ENCODE measurements at regions of chr12 and their contacts with region 1.

Region 1: DNA sequence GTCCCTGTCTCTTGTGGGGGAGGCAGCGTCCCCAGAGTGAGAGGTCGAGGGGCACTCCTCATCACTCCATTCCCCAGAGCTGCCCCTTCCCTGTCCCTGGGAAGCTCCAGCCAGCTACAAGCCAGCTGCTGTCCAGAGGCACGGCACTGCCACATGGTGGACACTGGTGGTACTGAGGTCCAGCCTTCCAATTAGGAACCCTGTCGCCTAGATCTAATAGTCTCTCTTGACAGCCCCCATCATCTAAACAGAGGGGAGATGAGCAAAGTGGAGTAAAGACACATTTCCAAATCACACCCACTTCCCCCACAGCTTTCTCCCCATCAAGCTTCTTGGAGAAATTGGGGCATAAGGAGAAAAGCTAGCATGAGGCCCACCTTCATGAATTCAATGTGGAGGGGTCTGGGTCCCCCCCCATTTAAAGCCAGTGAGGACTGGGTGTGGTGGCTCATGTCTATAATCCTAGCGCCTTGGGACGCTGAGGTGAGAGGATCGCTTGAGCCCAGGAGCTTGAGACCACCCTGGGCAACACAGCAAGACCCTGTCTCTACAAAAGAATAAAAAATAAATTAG is 2.1 kb upstream of the INHBE start:
- DNase-seq: peak; percentile 82 to 88 (median 84)
- ATAC-seq: peak; percentile 83
- H3K4me3 ChIP-seq: no peak overlapping the region
- H3K27ac ChIP-seq: no peak overlapping the region
- H3K4me1 ChIP-seq: peaks cover 9% of the 10 kb centered on the region
- H3K27me3 ChIP-seq: no peaks in the 10 kb centered on the region
- CTCF ChIP-seq: peak; percentile 81 to 90 (median 88)
- POLR2A ChIP-seq: no peak

Region 2: DNA sequence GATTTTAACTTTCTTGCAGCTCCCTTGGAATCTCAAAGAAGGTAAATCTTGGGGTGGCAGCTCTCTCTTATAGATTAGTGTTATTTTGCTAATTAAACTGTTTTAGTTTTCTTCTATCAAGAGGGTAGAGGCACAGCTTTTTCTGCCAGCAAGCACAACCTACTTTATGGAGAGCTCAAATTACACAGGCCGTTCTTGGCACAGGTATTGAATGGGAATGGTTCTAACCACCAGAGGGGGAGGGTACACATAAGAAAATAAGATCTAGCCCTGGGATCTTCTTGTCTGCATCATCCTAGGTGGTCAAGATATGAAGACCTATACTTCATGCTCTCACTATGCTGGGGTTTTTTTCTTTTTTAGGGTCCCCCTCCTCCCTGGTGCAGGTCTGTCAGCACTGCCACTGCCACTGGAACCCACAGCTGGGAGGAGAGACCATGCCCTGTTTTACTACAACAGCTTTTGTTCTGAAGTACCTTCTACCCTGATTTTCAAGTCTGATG is 153.5 kb before region 1 on chr12:
- intact Hi-C with region 1: loop called (anchors 5 kb)
- DNase-seq: no peak
- ATAC-seq: no peak
- H3K4me3 ChIP-seq: no peak overlapping the region
- H3K27ac ChIP-seq: no peak overlapping the region
- H3K4me1 ChIP-seq: no peaks in the 10 kb centered on the region
- H3K27me3 ChIP-seq: no peaks in the 10 kb centered on the region
- CTCF ChIP-seq: no peak
- POLR2A ChIP-seq: no peak

Measured in body of pancreas (tissue), 4 donors.